Tibial artery (tissue), 4 donors: ENCODE measurements at regions of chr10 and their contacts with region 1.

Region 1: DNA sequence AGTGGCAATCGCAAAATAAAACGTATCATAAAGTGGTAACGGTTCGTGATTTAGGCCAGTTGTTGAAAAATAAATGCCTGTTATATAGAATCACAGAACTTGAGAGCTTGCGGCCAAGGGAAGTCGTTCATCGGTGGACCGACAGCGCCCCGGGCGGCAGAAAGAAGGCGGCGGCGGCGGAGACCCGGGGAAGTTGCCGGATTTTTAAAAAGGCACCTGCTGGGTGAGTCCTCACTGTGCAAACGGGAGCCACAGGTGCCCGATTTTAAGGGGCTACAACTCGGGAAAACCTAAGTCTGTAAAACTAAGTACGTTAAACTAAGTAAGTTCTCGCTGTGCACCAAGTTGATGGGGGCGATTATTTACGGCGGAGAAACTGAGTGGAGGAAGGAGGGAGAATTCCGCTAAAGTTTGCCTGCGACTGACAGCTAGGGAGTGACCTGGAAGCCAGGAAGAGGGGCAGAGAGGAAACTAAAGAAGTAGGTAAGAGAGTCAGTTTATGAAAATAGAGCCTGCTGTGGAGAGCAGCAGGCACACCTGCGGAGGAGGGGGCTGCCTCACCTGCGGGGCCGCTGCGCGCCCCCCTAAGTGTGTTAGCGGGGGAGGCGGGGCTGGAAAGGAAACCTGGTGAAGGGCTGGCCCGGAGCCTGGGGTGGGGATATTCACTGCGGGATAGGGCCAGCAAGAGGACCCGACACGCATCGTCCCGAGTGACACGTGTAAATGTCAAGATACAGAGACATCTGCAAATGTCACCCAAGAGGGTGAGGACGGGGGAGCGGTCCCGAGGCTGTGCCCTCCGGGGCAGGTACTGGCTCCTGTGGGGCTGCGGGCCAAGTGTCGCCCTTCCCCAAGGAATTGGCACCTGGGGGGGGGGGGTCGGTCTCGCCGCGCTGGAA is 1.0 kb downstream of the ADAM12 start:
- DNase-seq: peak; percentile 52 to 77
- H3K4me3 ChIP-seq: peak overlapping the region; percentile 50 to 68
- H3K27ac ChIP-seq: peak overlapping the region; percentile 41 to 45
- H3K4me1 ChIP-seq: peaks cover 0 to 28% (median 14%) of the 10 kb centered on the region in 4 donors
- H3K27me3 ChIP-seq: no peaks in the 10 kb centered on the region
- CTCF ChIP-seq: peak; percentile 76 to 79

Region 2: GRCh38 chr10:125982260-125982948 is 404.9 kb before region 1 on chr10:
- intact Hi-C with region 1: loop called (anchors 5 kb)
- DNase-seq: no peak
- H3K4me3 ChIP-seq: no peak overlapping the region
- H3K27ac ChIP-seq: no peak overlapping the region
- H3K4me1 ChIP-seq: no peaks in the 10 kb centered on the region
- H3K27me3 ChIP-seq: peaks cover 0 to 3% of the 10 kb centered on the region in 2 donors
- CTCF ChIP-seq: peak; percentile 72 to 81

Region 3: GRCh38 chr10:126770809-126771208 is 383.5 kb after region 1 on chr10:
- intact Hi-C with region 1: no loop called
- DNase-seq: no peak
- H3K4me3 ChIP-seq: no peak overlapping the region
- H3K27ac ChIP-seq: no peak overlapping the region
- H3K4me1 ChIP-seq: no peaks in the 10 kb centered on the region
- H3K27me3 ChIP-seq: no peaks in the 10 kb centered on the region
- CTCF ChIP-seq: no peak